ENCODE measurements at regions of chr5 and their contacts with region 1.

Region 1: DNA sequence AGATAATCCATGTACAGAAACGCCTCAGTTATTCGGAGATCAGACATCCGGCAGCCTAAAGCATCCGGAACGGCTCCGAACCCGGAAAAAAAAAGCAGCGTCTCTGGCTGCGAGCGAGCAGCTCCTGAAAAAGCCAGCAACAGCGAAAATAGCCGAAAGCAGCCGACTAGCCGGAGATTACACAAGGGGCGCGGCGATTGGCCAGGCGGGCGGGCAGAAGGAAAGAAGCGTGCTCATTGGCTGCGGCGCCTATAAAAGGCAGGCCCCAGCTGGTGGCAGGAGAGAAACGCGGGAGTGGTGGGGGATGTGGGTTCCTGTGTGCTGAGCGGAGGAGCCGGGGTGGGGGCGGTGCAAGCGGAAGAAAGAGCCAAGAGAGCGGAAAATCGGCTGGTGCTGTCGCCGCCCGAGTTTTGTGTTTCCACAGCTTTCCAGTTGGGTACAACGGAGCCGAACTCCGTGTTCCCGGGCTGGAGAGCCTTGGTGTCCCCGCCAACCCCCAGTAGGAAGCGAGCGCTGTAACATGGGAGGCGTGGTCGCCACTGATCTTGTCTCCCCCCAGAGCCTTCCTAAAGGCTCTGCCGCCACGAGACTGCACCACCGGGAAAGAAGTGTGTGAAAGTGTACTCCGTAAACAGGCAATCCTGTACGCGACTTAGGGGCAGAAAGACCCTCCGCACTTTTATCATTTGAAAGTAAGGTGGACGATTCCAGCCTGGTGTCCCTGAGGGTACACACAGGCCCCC is at the start of gene ARL15:
- DNase-seq: peak; percentile 98
- H3K4me3 Mint-ChIP-seq: peak within 1 kb of the TSS; percentile 83
- H3K27ac Mint-ChIP-seq: peak within 1 kb of the TSS; percentile 73
- H3K4me1 Mint-ChIP-seq: peaks cover 21% of the 10 kb centered on the region
- H3K27me3 Mint-ChIP-seq: peaks cover 25% of the 10 kb centered on the region
- total RNA-seq, gene ARL15: 6.0 and 6.8 TPM in 2 replicates

Region 2: DNA sequence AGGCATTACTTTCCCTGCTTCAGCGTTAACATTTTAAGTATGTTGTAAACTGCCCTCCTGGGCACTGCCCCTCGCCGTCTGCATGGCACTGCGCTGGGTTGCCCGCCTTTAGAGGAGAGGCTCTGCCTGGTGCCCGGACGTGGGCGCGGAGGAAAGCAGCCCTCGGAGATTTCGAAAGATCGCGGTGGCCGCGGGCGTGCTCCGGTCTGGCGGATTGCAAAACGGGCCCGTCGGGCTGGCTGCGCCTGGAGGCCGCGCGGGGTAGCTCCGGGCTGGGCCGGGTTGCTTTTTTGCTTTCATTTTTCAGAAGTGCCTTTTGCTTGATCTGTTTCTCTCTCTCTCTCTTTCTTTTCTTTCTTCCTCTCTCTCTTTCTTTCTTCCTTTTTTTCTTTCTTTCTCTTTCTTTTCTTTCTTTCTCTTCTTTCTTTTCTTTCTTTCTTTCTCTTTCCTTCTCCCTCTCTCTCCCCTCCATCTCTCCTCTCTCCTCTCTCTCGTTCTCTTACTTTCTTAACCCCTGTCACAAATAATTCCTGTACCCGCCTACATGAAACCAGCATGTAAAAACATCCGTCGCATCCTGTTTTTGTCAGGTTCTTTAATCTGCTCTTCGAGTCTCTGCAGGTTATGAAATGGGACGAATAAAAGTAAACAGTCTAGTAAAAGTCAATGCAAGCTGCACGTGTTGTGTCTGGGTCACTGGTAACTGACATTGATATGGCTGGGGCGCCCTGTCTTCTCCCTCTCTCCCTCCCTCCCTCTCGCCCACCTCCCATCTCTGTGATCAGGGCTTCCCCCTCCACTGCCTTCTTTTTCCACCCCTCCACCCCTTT is 828.5 kb before region 1 on chr5:
- intact Hi-C with region 1: loop called (anchors 5 kb)
- DNase-seq: peak; percentile 64
- H3K4me3 Mint-ChIP-seq: peak overlapping the region; percentile 86
- H3K27ac Mint-ChIP-seq: peak overlapping the region; percentile 71
- H3K4me1 Mint-ChIP-seq: peaks cover 29% of the 10 kb centered on the region
- H3K27me3 Mint-ChIP-seq: peaks cover 62% of the 10 kb centered on the region

Region 3: DNA sequence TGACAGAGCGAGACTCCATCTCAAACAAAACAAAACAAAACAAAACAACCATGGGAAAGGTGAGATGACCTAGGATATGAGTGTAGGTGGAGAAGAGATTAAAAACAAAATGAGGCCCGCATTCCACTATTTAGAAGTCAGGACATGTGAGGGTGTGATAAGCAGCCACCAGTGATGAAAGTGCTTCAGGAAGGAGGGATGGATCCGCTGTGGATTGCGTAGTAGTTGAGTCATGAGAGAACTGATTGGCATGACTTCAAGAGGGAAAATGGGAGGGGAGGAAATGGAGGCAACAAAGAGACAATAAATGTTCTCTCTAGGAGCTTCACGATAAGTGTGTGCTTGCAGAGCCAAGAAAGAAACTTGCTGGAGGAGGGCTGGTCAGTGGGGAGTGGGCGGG is 367.9 kb before region 1 on chr5:
- intact Hi-C with region 1: no loop called
- DNase-seq: no peak
- H3K4me3 Mint-ChIP-seq: no peak overlapping the region
- H3K27ac Mint-ChIP-seq: no peak overlapping the region
- H3K4me1 Mint-ChIP-seq: no peaks in the 10 kb centered on the region
- H3K27me3 Mint-ChIP-seq: no peaks in the 10 kb centered on the region

Region 4: DNA sequence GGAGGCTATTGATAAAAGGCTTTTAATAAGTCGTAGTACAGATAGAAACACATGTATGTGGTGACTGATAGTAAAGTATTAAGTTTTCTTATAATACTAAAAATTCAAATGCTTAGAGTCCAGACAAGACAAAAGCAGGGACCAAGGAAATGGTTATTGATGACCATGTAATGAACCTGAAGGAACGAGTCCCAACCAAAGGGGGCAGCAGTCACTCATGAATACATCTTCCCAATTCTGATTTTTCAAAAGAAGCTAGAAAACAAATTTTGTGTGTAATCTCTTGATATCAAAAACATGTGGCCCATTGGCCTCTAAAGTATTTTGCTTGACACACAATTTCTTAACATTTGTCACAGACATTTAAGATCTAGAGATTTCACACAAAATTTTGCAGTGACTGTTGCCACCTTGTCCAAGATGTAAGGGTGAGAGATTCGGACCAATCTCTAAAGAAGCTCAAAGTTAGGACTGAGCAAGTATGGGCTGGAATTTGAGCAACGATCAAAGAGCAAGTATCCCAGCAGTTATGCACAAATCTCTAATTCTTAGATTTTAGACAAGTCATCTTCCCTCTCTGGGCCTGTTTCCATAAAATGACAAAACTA is 67.0 kb before region 1 on chr5:
- intact Hi-C with region 1: loop called (anchors 5 kb)
- DNase-seq: no peak
- H3K4me3 Mint-ChIP-seq: no peak overlapping the region
- H3K27ac Mint-ChIP-seq: no peak overlapping the region
- H3K4me1 Mint-ChIP-seq: no peaks in the 10 kb centered on the region
- H3K27me3 Mint-ChIP-seq: peaks cover 10% of the 10 kb centered on the region

Region 5: DNA sequence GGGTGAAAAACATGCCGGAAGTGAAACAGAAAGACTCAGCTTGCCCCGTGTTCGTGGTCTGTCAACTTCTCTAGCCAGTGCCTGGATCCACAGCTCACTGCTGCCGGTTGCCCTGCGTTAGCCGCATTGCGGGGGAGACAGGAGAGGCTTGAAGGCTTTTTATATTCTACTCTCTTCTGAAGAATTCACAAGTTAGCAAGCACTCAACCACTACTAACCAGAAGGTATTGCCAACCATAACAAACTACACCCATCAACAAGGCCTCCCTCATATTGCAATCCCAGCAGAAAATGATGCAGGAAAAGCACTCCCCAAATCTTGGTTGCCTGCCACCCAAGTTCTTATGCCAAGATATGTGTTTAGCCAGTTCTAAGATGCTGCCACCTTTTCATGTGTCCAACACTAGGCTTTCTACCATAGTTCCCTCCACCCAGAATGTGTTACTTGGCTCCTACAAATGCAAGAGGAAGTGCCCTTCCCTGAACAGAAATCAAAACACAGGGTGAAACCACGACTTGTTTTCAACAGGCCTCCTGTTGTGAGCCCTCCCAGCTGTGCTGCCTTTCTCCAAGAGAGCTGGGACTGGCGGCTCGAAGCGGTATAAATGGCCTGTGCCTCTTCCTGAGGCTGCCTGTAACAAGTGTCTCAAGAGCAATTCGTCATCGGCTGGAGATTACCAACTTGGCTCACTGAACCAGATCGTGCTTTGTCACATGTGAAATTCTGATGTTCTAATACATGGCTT is 335.9 kb after region 1 on chr5:
- intact Hi-C with region 1: loop called (anchors 2 kb)
- DNase-seq: peak; percentile 74
- H3K4me3 Mint-ChIP-seq: peak overlapping the region; percentile 46
- H3K27ac Mint-ChIP-seq: peak overlapping the region; percentile 86
- H3K4me1 Mint-ChIP-seq: peaks cover 50% of the 10 kb centered on the region
- H3K27me3 Mint-ChIP-seq: no peaks in the 10 kb centered on the region

Region 6: GRCh38 chr5:54703133-54703532 is 392.5 kb after region 1 on chr5:
- intact Hi-C with region 1: no loop called
- DNase-seq: no peak
- H3K4me3 Mint-ChIP-seq: no peak overlapping the region
- H3K27ac Mint-ChIP-seq: no peak overlapping the region
- H3K4me1 Mint-ChIP-seq: peaks cover 25% of the 10 kb centered on the region
- H3K27me3 Mint-ChIP-seq: peaks cover 12% of the 10 kb centered on the region

Region 7: GRCh38 chr5:54867310-54867944 is 556.8 kb after region 1 on chr5:
- intact Hi-C with region 1: loop called (anchors 2 kb)
- DNase-seq: no peak
- H3K4me3 Mint-ChIP-seq: no peak overlapping the region
- H3K27ac Mint-ChIP-seq: no peak overlapping the region
- H3K4me1 Mint-ChIP-seq: peaks cover 29% of the 10 kb centered on the region
- H3K27me3 Mint-ChIP-seq: peaks cover 64% of the 10 kb centered on the region

Region 8: DNA sequence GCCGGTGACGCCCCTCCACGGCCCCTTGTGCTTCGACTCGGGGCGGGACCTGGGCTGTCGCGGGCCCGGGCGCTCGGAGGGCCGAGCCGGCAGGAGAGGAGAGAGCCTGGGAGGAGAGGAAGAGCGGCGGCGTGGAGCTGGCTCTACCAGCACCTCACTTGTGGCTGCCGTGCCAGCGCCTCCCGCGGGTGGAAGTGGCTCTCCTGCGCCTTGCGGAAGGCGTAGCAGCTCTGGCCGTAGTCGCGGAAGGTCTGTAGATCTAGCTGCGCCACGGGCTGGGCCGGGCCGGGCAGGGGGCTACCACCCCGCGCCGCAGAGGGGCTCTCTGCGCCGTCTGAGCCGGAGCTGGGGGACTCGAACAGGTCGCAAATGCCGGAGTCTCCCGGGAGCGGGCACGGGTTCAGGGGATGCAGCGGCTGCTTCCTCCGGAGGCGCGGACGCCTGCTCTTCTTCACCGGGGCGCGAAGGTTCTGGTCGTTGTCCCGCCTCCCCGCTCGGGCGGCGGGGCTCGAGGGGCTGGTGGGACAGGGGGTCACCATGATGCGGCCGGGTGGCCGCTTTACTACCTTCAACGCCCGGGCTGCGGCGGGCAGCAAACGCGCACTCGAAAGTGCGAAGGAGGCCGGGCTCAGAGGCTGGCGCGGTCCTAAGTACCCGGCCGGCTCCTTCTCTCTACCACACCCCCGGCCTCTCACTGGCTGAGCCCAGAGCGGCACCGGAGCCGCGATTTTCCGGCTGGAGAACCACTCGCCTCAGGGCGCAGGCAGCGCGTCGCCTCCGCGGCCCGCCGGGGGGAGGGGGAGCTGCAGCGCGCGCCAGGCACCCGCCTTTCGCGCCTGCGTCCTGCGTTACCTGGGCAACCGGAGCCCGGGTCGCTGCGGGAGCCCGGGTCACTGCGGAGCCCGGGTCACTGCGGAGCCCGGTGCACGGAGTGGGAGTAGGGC is 922.7 kb after region 1 on chr5 and contains the start of gene CCNO:
- intact Hi-C with region 1: loop called (anchors 5 kb)
- DNase-seq: peak; percentile 64
- H3K4me3 Mint-ChIP-seq: peak within 1 kb of the TSS; percentile 82
- H3K27ac Mint-ChIP-seq: peak within 1 kb of the TSS; percentile 17
- H3K4me1 Mint-ChIP-seq: peaks cover 27% of the 10 kb centered on the region
- H3K27me3 Mint-ChIP-seq: peaks cover 79% of the 10 kb centered on the region
- total RNA-seq, gene CCNO: 0.27 TPM in 1 of 2 replicates, not detected in the other